Ovary (tissue), 10 donors: ENCODE measurements at regions of chr21 and their contacts with region 1.

Region 1: DNA sequence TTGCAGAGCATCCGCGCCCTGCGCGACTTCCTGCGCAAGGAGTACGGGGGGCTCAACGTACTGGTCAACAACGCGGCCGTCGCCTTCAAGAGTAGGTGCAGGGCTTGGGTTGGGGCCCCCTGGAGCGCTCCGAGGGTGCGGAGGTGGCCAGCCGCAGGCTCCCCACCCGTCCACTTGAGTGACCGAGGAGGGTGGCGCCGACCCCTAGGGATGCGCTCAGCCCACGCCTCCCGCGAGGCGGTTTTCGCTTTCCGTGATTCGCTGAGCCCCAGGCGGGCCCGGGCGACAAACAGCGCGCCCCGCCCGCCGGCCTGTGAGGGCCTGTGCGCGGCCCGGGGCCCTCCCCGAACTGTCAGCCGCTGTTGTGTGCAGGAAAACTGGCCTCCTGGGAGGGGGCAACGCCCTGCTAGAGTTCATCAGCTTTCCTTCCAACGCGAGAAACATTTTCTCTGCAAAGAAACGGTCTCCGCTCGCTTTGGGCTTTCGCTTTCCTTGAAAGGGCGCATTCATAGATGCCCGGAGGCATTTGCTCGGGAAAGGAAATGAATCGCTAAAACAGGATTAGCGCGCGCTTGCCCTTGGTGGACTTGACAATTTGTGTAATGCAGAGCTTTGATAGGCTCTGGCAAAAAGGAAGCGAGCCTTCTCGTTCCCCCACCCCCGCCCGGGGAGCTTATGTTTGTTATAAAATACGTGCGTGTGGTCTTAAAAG is 668 bp downstream of the CBR3 start:
- DNase-seq: peak; percentile 60 to 76 (median 72)
- H3K4me3 ChIP-seq: peak overlapping the region; percentile 48
- H3K27ac ChIP-seq: peak overlapping the region; percentile 52 to 92
- H3K4me1 ChIP-seq: peaks cover 5% of the 10 kb centered on the region
- H3K27me3 ChIP-seq: no peaks in the 10 kb centered on the region
- CTCF ChIP-seq: no peak
- EP300 ChIP-seq: no peak
- POLR2A ChIP-seq: peak; percentile 36

Region 2: GRCh38 chr21:36087362-36088138 is 48.0 kb before region 1 on chr21:
- intact Hi-C with region 1: no loop called
- DNase-seq: no peak
- H3K4me3 ChIP-seq: no peak overlapping the region
- H3K27ac ChIP-seq: no peak overlapping the region
- H3K4me1 ChIP-seq: no peaks in the 10 kb centered on the region
- H3K27me3 ChIP-seq: no peaks in the 10 kb centered on the region
- CTCF ChIP-seq: no peak
- EP300 ChIP-seq: no peak
- POLR2A ChIP-seq: no peak

Region 3: GRCh38 chr21:36330904-36331303 is 195.4 kb after region 1 on chr21:
- intact Hi-C with region 1: loop called in 2 of 4 experiments (anchors 5 kb)
- DNase-seq: peak; percentile 23 to 56 (median 37)
- H3K4me3 ChIP-seq: no peak overlapping the region
- H3K27ac ChIP-seq: no peak overlapping the region
- H3K4me1 ChIP-seq: peaks cover 13% of the 10 kb centered on the region
- H3K27me3 ChIP-seq: no peaks in the 10 kb centered on the region
- CTCF ChIP-seq: peak; percentile 8 to 57 (median 14)
- EP300 ChIP-seq: no peak
- POLR2A ChIP-seq: no peak

Region 4: GRCh38 chr21:36773117-36773516 is 637.6 kb after region 1 on chr21:
- intact Hi-C with region 1: no loop called
- DNase-seq: peak; percentile 52 to 87 (median 77)
- H3K4me3 ChIP-seq: no peak overlapping the region
- H3K27ac ChIP-seq: no peak overlapping the region
- H3K4me1 ChIP-seq: peaks cover 13% of the 10 kb centered on the region
- H3K27me3 ChIP-seq: no peaks in the 10 kb centered on the region
- CTCF ChIP-seq: no peak
- EP300 ChIP-seq: no peak
- POLR2A ChIP-seq: no peak